HCT116 (cell line): ENCODE measurements at regions of chr22 and their contacts with region 1.

Region 1: DNA sequence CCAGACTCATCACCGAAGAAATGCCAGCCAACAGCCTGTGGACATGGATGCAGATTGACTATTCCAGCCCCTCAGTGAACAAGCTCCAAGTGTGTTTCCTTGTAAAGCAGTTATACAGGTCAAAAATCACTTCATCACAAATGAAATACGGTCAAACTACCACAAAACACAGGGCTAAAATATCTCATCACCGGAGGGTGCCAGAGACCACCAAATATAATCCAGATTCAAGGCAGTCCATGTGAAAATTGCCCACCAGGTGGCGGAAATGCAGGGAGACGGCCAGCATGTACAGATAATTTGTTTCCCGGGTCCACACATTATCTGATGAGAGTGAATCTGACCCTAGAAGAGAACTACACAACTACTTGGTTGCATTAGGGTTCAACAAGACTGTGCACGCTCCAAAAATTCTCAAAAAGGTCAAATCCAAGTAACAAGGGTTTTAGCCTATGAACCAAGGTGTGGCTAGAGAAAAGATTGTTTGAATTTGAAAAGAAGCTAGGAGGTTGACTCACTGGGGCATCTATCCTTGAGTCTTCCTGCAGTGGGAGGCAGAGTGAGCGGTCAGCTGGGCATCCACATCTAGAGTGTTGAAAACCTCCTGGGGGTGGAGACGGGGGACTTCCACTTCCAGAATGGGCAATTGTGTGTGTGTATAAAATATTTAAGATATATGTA is 71.7 kb downstream of the IGLL5 start:
- DNase-seq: peak; percentile 80
- ATAC-seq: peak; percentile 73
- H3K4me3 ChIP-seq: no peak overlapping the region
- H3K27ac ChIP-seq: no peak overlapping the region
- H3K4me1 ChIP-seq: no peaks in the 10 kb centered on the region
- H3K27me3 ChIP-seq: no peaks in the 10 kb centered on the region
- CTCF ChIP-seq: peak; percentile 85 to 100 (median 99)
- POLR2A ChIP-seq: no peak
- RAD21 ChIP-seq: peak; percentile 98

Region 2: GRCh38 chr22:22593964-22594656 is 365.2 kb before region 1 on chr22:
- CTCF ChIA-PET with region 1: interaction called, 5 read pairs
- POLR2A ChIA-PET with region 1: no interaction called
- RAD21 ChIA-PET with region 1: no interaction called
- intact Hi-C with region 1: loop called (anchors 5 kb)
- DNase-seq: peak; percentile 48
- ATAC-seq: peak; percentile 91
- H3K4me3 ChIP-seq: no peak overlapping the region
- H3K27ac ChIP-seq: no peak overlapping the region
- H3K4me1 ChIP-seq: peaks cover 0 to 3% of the 10 kb centered on the region in 2 experiments; a peak in 1 of 4 replicates
- H3K27me3 ChIP-seq: no peaks in the 10 kb centered on the region
- CTCF ChIP-seq: peak; percentile 48 to 85 (median 83); a peak in 5 of 6 replicates
- POLR2A ChIP-seq: no peak
- RAD21 ChIP-seq: peak; percentile 55

Region 3: DNA sequence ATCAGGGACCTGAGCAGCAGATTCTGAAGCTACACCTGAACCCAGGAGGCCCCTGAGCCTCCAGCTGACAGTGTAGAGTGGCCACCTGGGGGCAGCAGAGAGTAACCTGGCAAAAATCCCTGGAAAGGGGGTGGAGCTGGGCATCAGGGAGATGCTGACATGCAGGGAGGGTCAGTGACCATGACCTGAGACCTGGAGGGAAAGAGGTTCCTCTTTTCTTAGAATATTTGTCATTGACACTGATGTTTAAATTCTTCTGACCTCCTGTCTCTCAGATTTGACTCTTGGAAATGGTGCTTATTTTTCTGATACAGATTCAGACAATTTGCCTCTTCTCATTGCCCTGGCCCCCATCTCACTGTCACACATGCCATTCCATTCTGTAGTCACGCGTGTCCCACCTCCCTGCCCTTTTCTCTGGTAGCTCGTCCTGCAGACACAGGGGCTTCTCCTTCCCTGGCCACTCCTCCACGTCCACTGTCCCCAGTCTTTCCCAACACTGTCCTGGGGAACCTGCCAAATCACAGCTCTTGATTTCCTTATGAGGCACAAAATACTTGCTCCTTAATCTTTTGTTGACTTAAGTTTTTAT is 188.9 kb before region 1 on chr22:
- CTCF ChIA-PET with region 1: interaction called, 24 read pairs
- POLR2A ChIA-PET with region 1: no interaction called
- RAD21 ChIA-PET with region 1: no interaction called
- intact Hi-C with region 1: no loop called
- DNase-seq: no peak
- ATAC-seq: peak; percentile 96
- H3K4me3 ChIP-seq: no peak overlapping the region
- H3K27ac ChIP-seq: no peak overlapping the region
- H3K4me1 ChIP-seq: no peaks in the 10 kb centered on the region
- H3K27me3 ChIP-seq: peaks cover 8% of the 10 kb centered on the region; the same call in 1 of the 2 replicates
- CTCF ChIP-seq: peak; percentile 59 to 94 (median 90); a peak in 5 of 6 replicates
- POLR2A ChIP-seq: no peak
- RAD21 ChIP-seq: peak; percentile 38; the same call in 1 of the 2 replicates

Region 4: DNA sequence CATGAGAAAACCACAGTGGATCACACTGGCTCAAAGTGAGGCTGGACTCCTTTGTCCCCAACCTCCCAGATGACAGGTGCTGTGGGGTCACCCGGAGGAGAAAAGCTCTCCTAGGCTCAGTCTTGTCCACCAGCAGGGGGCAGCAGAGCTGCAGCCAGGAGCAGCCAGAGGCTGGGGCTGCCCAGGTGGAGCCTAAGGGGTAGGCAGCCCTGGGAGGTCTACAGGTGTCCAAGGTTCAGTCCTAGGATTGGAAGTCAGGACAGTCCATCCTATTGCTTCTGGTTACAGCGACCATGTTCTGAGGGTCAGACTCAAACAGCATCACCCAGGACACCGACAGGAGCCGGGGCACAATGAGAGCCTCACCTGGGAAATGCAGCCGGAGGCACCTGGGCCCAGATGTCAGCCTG is 149.3 kb before region 1 on chr22:
- CTCF ChIA-PET with region 1: interaction called, 25 read pairs
- POLR2A ChIA-PET with region 1: no interaction called
- RAD21 ChIA-PET with region 1: no interaction called
- intact Hi-C with region 1: loop called (anchors 2 kb)
- DNase-seq: peak; percentile 36
- ATAC-seq: peak; percentile 100
- H3K4me3 ChIP-seq: no peak overlapping the region
- H3K27ac ChIP-seq: no peak overlapping the region
- H3K4me1 ChIP-seq: no peaks in the 10 kb centered on the region
- H3K27me3 ChIP-seq: no peaks in the 10 kb centered on the region
- CTCF ChIP-seq: peak; percentile 54 to 98 (median 97); a peak in 5 of 6 replicates
- POLR2A ChIP-seq: no peak
- RAD21 ChIP-seq: peak; percentile 66

Region 5: DNA sequence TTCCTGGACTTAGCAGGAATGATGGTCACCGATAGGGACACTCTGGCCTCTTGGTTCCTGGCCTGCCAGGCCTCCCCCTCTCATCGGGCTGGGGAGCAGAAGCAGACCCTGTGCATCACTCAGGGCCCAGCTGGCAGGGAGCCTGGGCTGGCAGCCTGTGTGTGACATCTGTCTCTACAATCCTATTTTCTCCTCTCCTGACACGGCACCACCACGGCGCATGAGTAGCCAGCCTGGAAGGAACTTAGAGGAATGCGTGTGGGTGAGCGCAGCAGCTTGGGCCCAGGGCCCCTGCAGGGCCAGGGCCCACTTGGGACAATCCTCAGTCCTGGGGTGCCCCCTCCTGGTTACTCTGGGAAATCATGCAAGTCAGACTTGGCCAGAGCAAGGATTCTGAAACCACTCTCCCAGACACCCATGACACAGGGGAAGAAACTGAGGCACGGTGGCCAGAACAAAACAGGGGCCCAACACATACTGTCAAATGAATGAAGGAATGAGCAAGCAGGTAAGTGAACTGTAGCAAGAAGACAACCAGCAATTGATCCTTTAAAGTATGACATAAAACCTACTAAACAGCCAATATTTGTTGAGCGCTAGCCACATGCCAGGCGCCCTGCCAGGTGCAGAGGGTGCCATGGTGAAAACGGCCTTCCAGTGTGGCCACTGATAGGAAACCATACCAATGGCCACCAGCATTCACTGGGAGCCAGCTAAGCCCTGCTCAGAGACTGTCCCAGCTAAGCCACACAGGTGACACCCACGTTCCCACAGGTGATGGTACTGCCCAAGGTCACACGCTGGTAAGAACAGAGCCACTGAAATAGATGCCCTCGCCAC is 169.2 kb after region 1 on chr22:
- CTCF ChIA-PET with region 1: interaction called, 174 read pairs
- POLR2A ChIA-PET with region 1: interaction called, 3 read pairs
- RAD21 ChIA-PET with region 1: interaction called, 23 read pairs
- intact Hi-C with region 1: loop called (anchors 1 kb)
- DNase-seq: peak; percentile 59
- ATAC-seq: peak; percentile 92
- H3K4me3 ChIP-seq: no peak overlapping the region
- H3K27ac ChIP-seq: no peak overlapping the region
- H3K4me1 ChIP-seq: 0 out of 4 replicates have a peak, but pooled peaks cover 0 to 2% of the 10 kb centered on the region in 2 experiments
- H3K27me3 ChIP-seq: no peaks in the 10 kb centered on the region
- CTCF ChIP-seq: peak; percentile 72 to 96 (median 86)
- POLR2A ChIP-seq: no peak
- RAD21 ChIP-seq: peak; percentile 88

Region 6: DNA sequence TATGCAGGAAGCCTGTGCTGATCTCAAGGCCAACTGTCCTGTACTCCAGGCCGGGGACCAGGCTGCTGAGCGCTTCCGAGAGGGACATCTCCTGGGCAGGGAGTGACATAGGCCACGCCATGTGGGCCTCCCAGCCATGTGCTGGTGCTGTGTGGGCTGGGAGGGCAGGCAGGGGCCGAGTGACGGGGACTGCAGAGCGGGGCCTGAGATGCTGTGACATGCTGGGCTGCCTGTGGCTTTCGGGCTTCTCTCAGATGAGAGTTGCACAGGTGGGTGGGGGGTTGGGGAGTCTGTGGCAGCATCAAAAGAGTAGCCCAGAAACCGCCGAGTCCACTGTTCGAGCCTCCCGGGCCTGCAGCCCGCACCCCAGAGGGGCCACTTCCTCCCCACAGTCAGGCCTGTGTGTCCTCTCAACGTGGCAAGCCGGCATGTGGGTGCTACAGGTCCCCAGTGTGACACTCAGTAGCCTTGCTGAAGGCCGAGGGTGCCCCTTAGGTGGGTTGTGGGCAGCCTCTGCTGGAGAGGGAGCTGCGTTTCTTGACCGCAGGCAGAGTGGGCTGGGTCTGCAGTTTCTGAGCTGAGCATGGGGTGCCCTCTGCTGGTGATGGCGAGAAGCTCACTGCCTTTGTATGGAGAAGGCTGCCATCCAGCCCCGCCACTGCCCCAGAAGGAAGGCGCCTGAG is 322.3 kb after region 1 on chr22:
- CTCF ChIA-PET with region 1: interaction called, 17 read pairs
- POLR2A ChIA-PET with region 1: no interaction called
- RAD21 ChIA-PET with region 1: interaction called in 1 of 2 experiments, 4 read pairs
- intact Hi-C with region 1: loop called (anchors 2 kb)
- DNase-seq: peak; percentile 19
- ATAC-seq: peak; percentile 85
- H3K4me3 ChIP-seq: peak overlapping the region in 1 of 2 experiments; percentile 31; a peak in 1 of 4 replicates
- H3K27ac ChIP-seq: peak overlapping the region; percentile 61
- H3K4me1 ChIP-seq: peaks cover 18 to 23% of the 10 kb centered on the region in 2 experiments
- H3K27me3 ChIP-seq: no peaks in the 10 kb centered on the region
- CTCF ChIP-seq: peak; percentile 82 to 87 (median 86)
- POLR2A ChIP-seq: no peak
- RAD21 ChIP-seq: peak; percentile 82

Region 7: DNA sequence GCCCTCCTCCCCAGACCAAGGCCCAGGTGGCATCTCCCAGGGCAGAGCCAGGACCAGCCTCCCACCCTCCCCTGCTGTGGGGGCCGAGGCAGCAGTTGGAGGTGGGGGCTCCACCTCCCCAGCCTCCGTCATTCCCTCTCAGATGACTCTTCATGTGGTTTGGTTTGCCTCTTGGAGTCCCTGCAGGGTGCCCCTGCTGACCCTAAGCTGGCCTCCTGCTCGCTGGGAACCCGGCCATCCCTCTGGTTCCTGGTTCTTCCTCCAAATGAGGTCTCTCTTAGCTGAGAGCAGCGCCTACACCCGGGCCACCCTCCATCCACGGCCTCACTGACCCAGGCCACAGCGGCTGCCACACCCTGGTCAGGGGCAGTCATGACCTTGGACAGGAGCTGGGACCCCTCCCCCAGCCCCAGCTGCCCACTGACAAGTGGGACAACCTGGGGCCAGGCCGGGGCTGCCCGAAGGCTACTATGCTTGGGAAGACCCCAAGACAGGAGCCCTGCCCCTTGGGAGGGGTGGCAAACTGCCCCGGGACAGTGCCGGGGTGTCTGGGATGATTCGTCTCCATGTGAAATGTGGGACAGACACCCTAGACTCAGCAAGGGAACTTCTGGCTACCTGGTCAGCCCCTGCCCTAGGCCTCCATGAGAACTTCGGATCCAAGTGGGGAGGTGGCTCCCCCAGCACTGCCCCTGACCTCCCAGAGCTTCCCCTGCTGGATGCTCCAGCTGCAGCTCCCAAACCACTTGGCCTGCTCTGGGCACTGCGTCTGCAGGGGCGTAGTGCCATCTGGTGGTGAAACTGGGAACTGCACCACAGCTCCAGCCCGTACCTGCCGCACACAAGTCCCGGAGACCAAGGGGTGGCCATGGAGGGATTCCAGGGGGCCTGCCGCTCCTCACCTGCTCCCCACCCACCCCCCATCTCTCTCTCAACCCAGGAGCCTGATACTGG is 426.3 kb after region 1 on chr22:
- CTCF ChIA-PET with region 1: interaction called, 29 read pairs
- POLR2A ChIA-PET with region 1: no interaction called
- RAD21 ChIA-PET with region 1: interaction called, 7 to 15 read pairs
- intact Hi-C with region 1: loop called (anchors 2 kb)
- DNase-seq: peak; percentile 61
- ATAC-seq: peak; percentile 95
- H3K4me3 ChIP-seq: no peak overlapping the region
- H3K27ac ChIP-seq: no peak overlapping the region; the same call in 1 of the 2 replicates
- H3K4me1 ChIP-seq: no peaks in the 10 kb centered on the region
- H3K27me3 ChIP-seq: no peaks in the 10 kb centered on the region
- CTCF ChIP-seq: peak; percentile 94 to 98 (median 96)
- POLR2A ChIP-seq: no peak
- RAD21 ChIP-seq: peak; percentile 93